Motor neuron (in vitro differentiated cells): ENCODE measurements at regions of chr13 and their contacts with region 1.

Region 1: GRCh38 chr13:33931397-33932311 is 113.7 kb downstream of the RFC3 start:
- ATAC-seq: peak; percentile 53 to 97 (median 68)
- H3K4me3 ChIP-seq: no peak overlapping the region
- H3K27ac ChIP-seq: no peak overlapping the region
- H3K4me1 ChIP-seq: peaks cover 4 to 6% of the 10 kb centered on the region in 2 donors

Region 2: DNA sequence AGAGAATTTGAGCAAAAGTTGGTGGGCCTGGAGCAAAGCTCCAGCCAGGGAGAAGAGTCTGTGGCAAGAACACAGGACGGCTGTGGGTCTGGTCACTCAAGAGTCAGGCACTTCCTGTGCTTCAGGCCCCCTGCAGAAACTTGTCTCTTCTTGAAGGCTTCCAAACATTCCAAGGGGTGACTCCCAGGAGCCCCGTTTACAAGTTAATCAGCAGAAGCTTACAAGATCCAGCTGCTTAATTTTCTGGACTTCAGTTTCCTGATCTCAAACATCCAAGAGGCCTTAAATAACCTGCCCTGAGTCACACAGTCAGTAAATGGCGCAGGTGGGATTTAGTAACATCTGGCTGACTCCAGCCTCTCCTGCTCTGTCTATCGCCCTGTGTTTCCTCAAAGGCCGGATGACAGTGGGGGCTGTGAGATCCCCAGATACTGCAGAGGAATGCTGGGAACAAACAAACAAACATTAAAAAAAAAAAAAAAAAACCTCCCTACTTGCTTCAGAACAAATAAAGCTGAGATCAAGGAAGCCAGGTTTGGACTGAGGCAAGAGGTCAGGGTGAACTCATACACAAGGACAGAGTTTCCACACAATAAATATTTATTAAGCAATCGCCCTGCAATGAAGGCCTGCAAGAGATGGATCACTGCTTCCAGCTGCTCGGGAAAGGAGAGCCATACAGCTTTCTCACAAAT is 289.1 kb before region 1 on chr13:
- in situ Hi-C with region 1: no loop called
- ATAC-seq: peak; percentile 68 to 94 (median 80)
- H3K4me3 ChIP-seq: no peak overlapping the region
- H3K27ac ChIP-seq: no peak overlapping the region
- H3K4me1 ChIP-seq: peaks cover 18 to 20% of the 10 kb centered on the region in 2 donors

Region 3: GRCh38 chr13:33723772-33724435 is 207.8 kb before region 1 on chr13:
- in situ Hi-C with region 1: no loop called
- ATAC-seq: peak; percentile 65 to 99 (median 96)
- H3K4me3 ChIP-seq: no peak overlapping the region
- H3K27ac ChIP-seq: no peak overlapping the region
- H3K4me1 ChIP-seq: peaks cover 3 to 8% of the 10 kb centered on the region in 2 donors

Region 4: DNA sequence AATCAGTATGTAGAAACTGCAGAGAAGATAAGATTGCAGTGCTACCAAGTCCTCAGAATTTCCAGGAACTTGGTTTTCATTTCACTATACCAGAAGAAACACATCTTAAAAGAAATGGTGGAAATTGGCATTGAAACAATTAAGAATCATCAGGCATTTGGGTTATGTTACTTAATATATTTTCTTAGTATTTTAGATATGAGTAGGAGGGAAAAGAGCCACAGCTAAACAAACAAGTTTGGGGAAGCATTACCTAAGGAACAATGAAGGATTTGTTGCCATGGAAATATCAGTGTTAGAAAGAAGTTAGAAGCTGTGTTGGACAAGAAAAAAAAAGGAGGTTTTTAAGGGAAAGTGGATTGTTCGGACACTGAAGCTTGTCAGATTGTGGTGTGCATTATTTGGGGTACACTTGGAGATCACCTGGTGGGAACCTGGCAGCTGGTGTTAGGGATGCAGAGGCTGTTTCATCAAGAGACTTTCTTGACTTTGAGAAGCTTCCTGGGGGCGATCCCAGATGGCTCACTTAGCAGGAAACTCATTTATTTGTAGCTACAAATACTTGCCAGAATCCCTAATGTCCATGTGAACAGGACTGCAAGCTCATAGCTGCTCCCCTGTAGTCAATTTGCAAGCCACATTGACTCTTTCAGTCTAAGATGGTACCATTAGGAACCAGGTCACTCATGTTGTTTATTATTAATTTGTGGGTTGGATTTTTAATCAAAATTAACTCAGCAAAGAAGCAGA is 133.0 kb after region 1 on chr13:
- in situ Hi-C with region 1: loop called in 2 of 9 experiments (anchors 5 to 25 kb)
- ATAC-seq: no peak
- H3K4me3 ChIP-seq: no peak overlapping the region
- H3K27ac ChIP-seq: no peak overlapping the region
- H3K4me1 ChIP-seq: no peaks in the 10 kb centered on the region

Region 5: GRCh38 chr13:34070006-34070405 is 138.4 kb after region 1 on chr13:
- in situ Hi-C with region 1: loop called in 3 of 9 experiments (anchors 5 to 25 kb)
- ATAC-seq: peak in 5 of 8 experiments; percentile 30 to 87 (median 44)
- H3K4me3 ChIP-seq: no peak overlapping the region
- H3K27ac ChIP-seq: no peak overlapping the region
- H3K4me1 ChIP-seq: no peaks in the 10 kb centered on the region

Region 6: GRCh38 chr13:34076943-34077703 is 145.5 kb after region 1 on chr13:
- in situ Hi-C with region 1: loop called in 2 of 9 experiments (anchors 10 to 25 kb)
- ATAC-seq: peak in 4 of 8 experiments; percentile 45 to 72 (median 59)
- H3K4me3 ChIP-seq: no peak overlapping the region
- H3K27ac ChIP-seq: no peak overlapping the region
- H3K4me1 ChIP-seq: no peaks in the 10 kb centered on the region

Region 7: DNA sequence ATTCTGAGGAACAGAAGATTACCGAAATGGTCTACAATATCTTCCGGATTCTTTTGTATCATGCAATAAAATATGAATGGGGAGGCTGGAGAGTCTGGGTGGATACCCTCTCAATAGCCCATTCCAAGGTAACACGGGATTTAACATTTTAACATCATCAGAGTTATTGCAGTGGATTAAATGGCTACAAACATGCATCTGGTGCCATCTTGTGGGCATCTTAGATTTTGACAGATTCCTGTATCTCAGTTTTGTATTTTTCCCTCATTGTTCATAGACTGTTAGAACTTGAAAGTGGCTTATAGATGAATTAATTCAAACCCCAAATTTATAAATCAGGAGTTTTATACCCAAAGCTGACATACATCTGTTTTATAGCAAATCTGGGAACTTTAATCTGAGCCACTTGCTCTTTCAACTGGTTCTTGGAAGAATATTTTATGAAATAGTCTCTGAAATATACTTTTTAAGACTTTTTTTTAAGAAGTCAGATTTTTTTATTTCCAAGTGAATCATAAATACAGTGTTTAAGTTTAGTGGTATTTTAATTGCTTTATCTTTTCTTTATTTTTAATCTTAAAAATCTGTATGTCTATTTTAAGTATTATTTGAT is 1225.6 kb after region 1 on chr13:
- in situ Hi-C with region 1: loop called in 2 of 9 experiments (anchors 25 kb)
- ATAC-seq: peak in 6 of 8 experiments; percentile 35 to 75 (median 52)
- H3K4me3 ChIP-seq: no peak overlapping the region
- H3K27ac ChIP-seq: no peak overlapping the region
- H3K4me1 ChIP-seq: no peaks in the 10 kb centered on the region